Thyroid gland (tissue), 4 donors: ENCODE measurements at regions of chr11 and their contacts with region 1.

Region 1: GRCh38 chr11:45322891-45323600 is 36.9 kb upstream of the SYT13 start:
- DNase-seq: no peak
- H3K4me3 ChIP-seq: no peak overlapping the region
- H3K27ac ChIP-seq: no peak overlapping the region
- H3K4me1 ChIP-seq: no peaks in the 10 kb centered on the region
- H3K27me3 ChIP-seq: no peaks in the 10 kb centered on the region
- CTCF ChIP-seq: no peak
- POLR2A ChIP-seq: no peak

Region 2: DNA sequence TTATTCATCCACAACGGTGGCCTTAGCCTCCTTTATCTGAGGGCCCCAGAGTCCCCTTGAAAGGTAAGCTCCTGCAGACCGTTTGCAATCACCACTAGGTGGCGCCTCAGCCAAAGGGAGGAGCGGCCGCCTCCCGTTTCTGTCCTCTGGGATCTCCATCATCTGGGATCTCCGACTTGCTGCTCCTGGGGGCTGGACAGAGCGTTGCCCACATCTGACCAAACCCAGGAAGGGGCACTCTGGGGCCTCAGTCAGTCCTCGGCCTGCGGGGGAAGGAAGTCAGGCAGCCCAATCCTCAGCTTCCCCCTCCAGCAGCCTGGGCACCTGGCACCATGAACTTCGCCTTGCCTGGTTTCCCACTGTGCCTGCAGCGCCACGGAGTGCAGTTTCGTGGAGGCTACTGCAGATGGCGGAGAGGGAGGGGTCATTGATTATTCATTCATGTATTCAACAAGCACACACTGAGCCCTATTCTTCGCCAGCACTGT is 395.8 kb before region 1 on chr11:
- intact Hi-C with region 1: loop called (anchors 10 kb)
- DNase-seq: peak; percentile 63 to 72
- H3K4me3 ChIP-seq: no peak overlapping the region
- H3K27ac ChIP-seq: no peak overlapping the region
- H3K4me1 ChIP-seq: no peaks in the 10 kb centered on the region
- H3K27me3 ChIP-seq: no peaks in the 10 kb centered on the region
- CTCF ChIP-seq: peak; percentile 74 to 92 (median 86)
- POLR2A ChIP-seq: no peak

Region 3: DNA sequence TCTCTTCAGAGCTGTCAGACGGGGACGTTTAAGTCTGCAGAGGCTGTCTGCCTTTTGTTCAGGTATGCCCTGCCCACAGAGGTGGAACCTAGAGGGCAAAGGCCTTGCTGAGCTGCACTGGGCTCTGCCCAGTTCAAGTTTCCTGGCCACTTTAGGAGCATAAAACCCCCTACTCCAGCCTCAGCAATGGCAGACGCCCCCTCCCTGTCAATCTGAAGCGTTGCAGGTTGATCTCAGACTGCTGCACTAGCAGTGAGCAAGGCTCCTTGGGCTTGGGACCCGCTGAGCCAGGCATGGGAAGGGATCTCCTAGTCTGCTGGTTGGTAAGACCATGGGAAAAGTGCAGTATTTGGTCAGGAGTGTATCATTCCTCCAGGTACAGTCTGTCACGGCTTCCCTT is 305.7 kb before region 1 on chr11:
- intact Hi-C with region 1: no loop called
- DNase-seq: no peak
- H3K4me3 ChIP-seq: no peak overlapping the region
- H3K27ac ChIP-seq: no peak overlapping the region
- H3K4me1 ChIP-seq: peaks cover 16 to 19% of the 10 kb centered on the region in 2 donors
- H3K27me3 ChIP-seq: no peaks in the 10 kb centered on the region
- CTCF ChIP-seq: no peak
- POLR2A ChIP-seq: no peak